ENCODE measurements at regions of chr3 and their contacts with region 1.

Region 1: GRCh38 chr3:13022348-13023234 is 50.6 kb downstream of the IQSEC1 start:
- DNase-seq: peak; percentile 86 to 92 (median 90)
- ATAC-seq: peak; percentile 60 to 86 (median 76)
- H3K4me3 ChIP-seq: peak overlapping the region in 10 of 12 donors; percentile 18 to 56 (median 41)
- H3K27ac ChIP-seq: peak overlapping the region; percentile 23 to 87 (median 70)
- H3K4me1 ChIP-seq: peaks cover 0 to 67% (median 56%) of the 10 kb centered on the region in 12 donors
- H3K27me3 ChIP-seq: no peaks in the 10 kb centered on the region
- CTCF ChIP-seq: no peak
- POLR2A ChIP-seq: no peak

Region 2: DNA sequence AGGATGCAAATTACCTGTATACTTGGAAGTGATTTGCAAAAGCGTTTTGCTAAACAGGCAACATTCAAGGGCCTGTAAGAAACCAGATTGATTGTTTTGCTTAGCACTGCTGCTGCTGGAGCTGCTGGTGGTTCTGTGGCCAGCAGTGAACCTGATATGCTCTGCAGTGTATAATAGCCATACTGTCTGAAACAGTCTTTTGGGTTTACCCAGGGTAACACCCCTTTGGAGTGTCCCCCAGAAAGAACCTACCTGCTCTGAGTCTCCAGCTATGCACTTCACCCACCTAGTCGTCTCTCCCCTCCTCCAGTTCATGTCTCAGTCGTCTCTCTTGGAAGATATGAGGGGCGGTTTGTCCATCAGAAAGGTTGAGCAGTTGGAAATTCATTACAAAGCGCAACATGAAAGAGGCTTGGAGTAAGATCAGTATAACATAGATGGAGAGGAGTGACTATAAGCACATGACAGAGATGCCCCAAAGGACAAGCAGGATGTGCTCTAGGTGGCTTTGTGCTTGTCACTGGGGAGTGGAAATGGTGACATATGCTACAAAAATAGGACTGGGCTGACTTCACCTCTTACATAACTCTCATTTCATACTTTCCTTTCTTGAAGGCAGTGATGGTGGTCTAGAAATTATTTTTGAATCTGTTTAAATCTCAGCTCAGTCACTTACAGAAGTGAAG is 461.9 kb before region 1 on chr3:
- intact Hi-C with region 1: no loop called
- DNase-seq: no peak
- ATAC-seq: peak in 2 of 4 donors; percentile 22 to 41
- H3K4me3 ChIP-seq: peak overlapping the region in 7 of 12 donors; percentile 6 to 93 (median 17)
- H3K27ac ChIP-seq: peak overlapping the region in 11 of 12 donors; percentile 23 to 96 (median 64)
- H3K4me1 ChIP-seq: peaks cover 0 to 66% (median 56%) of the 10 kb centered on the region in 12 donors
- H3K27me3 ChIP-seq: no peaks in the 10 kb centered on the region
- CTCF ChIP-seq: no peak
- POLR2A ChIP-seq: no peak

Region 3: GRCh38 chr3:12810013-12810780 is 212.4 kb before region 1 on chr3:
- intact Hi-C with region 1: no loop called
- DNase-seq: peak; percentile 95 to 98 (median 96)
- ATAC-seq: peak; percentile 98 to 99 (median 98)
- H3K4me3 ChIP-seq: peak overlapping the region; percentile 37 to 71 (median 66)
- H3K27ac ChIP-seq: peak overlapping the region in 11 of 12 donors; percentile 43 to 80 (median 75)
- H3K4me1 ChIP-seq: peaks cover 0 to 42% (median 17%) of the 10 kb centered on the region in 12 donors
- H3K27me3 ChIP-seq: no peaks in the 10 kb centered on the region
- CTCF ChIP-seq: peak; percentile 55 to 96 (median 74)
- POLR2A ChIP-seq: peak in 1 of 2 donors; percentile 77

Region 4: DNA sequence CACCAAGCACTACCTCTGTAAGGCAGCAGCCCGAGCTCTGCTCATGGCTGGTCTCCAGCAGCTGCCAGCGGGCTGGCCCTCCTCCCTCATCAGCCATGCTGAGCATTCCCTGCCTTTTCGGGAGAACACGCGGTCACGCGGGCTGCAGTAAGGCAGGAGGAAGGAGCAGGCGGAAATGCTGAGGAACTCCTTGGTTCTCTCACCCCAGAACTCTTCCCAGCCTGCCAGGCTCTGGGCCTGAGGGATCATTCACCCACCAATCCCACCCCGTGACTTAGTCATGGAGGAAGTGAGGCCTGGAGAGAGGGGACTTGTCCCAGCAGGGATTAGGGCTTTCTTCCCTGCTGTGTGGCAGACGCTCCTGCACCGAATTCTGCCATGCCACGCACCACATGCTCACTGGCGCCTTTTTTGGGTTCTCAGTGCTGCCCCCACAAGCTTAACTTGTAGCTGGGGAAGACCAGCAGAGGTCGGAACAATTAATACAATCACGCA is 138.4 kb before region 1 on chr3:
- intact Hi-C with region 1: no loop called
- DNase-seq: peak in 4 of 5 donors; percentile 57 to 71 (median 64)
- ATAC-seq: peak; percentile 82 to 95 (median 89)
- H3K4me3 ChIP-seq: no peak overlapping the region
- H3K27ac ChIP-seq: peak overlapping the region in 8 of 12 donors; percentile 28 to 59 (median 41)
- H3K4me1 ChIP-seq: peaks cover 0 to 11% (median 0%) of the 10 kb centered on the region in 12 donors
- H3K27me3 ChIP-seq: peaks cover 0 to 7% (median 0%) of the 10 kb centered on the region in 9 donors
- CTCF ChIP-seq: no peak
- POLR2A ChIP-seq: no peak

Region 5: DNA sequence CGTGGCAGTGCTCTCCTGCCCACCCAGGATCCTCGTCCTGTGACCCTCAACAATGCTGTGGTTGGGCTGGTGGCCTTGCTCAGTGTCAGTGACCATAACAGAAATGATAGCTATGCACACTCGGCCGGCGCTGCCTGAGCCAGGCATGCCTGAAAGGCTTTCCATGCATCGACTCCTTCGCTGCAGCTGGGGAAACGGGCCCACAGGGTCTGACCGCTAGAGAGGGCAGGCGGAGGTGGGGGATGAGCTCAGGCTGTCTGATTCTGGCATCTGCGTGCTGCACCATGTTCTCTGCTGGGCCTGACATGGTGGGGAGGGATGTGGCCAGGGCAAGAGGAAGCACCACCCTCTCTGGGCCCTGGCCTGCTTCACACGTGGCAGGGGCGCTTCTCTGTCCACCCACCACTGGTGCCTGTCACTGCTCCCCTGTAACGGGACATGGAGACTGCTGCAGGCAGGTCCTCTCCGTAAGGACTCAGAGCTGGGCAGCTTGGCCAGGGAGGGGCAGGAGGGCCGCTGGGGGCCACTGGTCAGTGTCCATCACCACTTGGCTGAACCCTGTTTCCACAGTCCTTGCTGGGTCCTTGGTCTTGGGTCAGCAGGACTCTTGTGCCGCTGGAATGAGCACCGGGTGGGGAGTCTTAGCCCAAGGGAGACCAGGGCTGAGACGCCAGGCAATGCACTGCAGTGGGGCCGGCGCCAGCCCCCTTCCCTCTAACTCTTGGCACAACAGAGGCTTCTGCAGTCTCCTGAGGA is 117.1 kb before region 1 on chr3:
- intact Hi-C with region 1: no loop called
- DNase-seq: peak in 2 of 5 donors; percentile 61 to 62
- ATAC-seq: peak; percentile 50 to 77 (median 64)
- H3K4me3 ChIP-seq: no peak overlapping the region
- H3K27ac ChIP-seq: peak overlapping the region in 7 of 12 donors; percentile 20 to 64 (median 49)
- H3K4me1 ChIP-seq: peaks cover 0 to 40% (median 24%) of the 10 kb centered on the region in 12 donors
- H3K27me3 ChIP-seq: no peaks in the 10 kb centered on the region
- CTCF ChIP-seq: no peak
- POLR2A ChIP-seq: no peak

Region 6: DNA sequence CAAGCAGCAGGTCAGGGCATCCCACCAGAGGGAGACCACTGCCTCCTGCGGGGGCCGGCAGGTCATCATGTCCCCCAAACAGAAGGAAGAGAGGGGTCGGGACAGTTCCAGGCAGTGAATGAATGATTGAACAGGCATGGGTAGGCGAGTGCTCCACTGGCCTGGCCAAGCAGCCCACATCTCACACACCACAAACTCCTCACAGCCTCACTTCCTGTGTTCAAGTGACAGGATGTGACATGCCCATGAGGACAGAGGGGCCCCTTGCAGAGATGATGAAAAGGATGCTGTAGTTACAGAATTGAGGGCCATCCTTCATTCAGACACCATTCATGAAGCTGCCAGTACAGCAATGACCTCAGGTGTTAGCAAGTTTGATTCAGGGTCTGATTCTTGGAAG is 46.9 kb after region 1 on chr3:
- intact Hi-C with region 1: loop called in 1 of 10 experiments (anchors 5 kb)
- DNase-seq: no peak
- ATAC-seq: no peak
- H3K4me3 ChIP-seq: no peak overlapping the region
- H3K27ac ChIP-seq: no peak overlapping the region
- H3K4me1 ChIP-seq: peaks cover 9 to 41% (median 20%) of the 10 kb centered on the region in 12 donors
- H3K27me3 ChIP-seq: peaks cover 0 to 24% (median 0%) of the 10 kb centered on the region in 9 donors
- CTCF ChIP-seq: no peak
- POLR2A ChIP-seq: no peak